Heart left ventricle (tissue), 16 donors: ENCODE measurements at regions of chr12 and their contacts with region 1.

Region 1: DNA sequence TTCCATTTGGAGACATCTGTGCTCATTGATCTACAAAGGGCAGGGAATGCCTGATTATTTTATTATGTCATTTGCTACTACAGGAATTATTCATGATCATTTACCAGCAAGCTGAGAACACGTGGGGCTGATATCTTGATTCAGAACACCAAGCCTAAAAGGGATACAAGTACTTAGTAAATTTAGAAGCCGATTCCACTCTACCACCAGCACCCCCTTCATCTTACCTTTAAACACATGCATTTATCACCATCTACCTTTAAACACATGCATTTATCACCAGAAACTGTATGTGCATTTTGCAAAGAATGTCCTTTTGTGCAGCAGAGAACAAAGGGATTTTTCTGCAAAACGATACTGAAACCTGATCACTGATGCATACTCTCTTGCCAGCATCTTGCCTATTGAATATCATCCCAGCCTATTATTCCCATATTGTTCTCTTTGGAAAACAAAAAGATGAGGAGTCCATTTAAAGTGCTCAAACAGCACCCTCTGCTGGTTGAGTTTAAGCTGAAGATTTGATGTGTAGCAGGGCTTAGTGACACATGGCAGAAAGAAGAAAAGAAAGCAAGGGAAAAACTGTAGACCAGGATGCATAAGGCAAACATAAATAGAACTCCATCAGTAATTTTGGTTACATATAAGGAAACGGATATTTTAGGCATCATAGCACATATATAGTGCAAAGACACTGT is 132.6 kb upstream of the PLEKHG7 start:
- DNase-seq: peak in 3 of 5 donors; percentile 48 to 71 (median 71)
- ATAC-seq: peak; percentile 47 to 89 (median 86)
- H3K4me3 ChIP-seq: no peak overlapping the region
- H3K27ac ChIP-seq: peak overlapping the region in 1 of 12 donors; percentile 59
- H3K4me1 ChIP-seq: peaks cover 0 to 47% (median 4%) of the 10 kb centered on the region in 12 donors
- H3K27me3 ChIP-seq: no peaks in the 10 kb centered on the region
- CTCF ChIP-seq: peak; percentile 71 to 93 (median 80)
- POLR2A ChIP-seq: no peak

Region 2: DNA sequence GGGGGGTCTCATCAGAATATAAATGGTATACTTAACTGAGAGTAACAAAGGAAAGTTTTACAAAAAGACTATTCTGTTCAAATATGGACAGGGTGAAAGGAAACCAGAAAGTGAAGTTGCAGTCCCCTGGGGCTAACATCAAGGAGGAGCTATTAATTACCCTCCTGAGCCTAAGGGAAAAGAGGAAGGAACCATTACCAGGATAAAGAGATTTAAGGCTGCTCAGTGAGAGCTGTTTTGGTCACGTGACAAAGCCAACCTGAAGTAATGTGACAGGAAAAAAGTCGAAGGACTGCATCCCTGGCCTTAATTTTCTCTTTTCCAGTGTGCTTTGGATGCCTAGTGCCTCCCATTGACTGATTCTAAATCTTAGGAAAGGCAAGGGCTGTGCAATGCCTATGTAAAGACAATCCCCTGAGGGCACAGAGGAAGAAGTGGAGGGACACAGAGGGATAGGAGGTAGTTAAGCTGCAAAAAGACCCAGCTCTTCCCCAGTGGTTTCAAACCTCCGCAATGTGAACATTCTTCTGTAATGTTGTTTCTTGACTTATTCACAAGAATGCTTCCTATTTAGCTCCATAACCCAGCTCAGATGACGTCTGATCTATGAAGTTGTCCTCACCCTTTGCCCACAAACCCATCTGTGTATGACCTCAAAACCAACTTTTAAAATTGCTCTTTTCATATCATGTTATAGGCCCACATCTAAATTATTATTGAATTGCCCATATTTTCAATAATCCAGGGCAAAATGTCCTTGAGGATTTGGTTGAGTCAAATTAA is 1199.9 kb before region 1 on chr12:
- intact Hi-C with region 1: loop called in 1 of 10 experiments (anchors 10 kb)
- DNase-seq: no peak
- ATAC-seq: no peak
- H3K4me3 ChIP-seq: no peak overlapping the region
- H3K27ac ChIP-seq: no peak overlapping the region
- H3K4me1 ChIP-seq: no peaks in the 10 kb centered on the region
- H3K27me3 ChIP-seq: no peaks in the 10 kb centered on the region
- CTCF ChIP-seq: no peak
- POLR2A ChIP-seq: no peak

Region 3: GRCh38 chr12:91577586-91578539 is 992.3 kb before region 1 on chr12:
- intact Hi-C with region 1: loop called in 7 of 10 experiments (anchors 2 to 10 kb)
- DNase-seq: no peak
- ATAC-seq: peak in 2 of 4 donors; percentile 45 to 50
- H3K4me3 ChIP-seq: peak overlapping the region in 9 of 12 donors; percentile 17 to 37 (median 26)
- H3K27ac ChIP-seq: peak overlapping the region in 3 of 12 donors; percentile 10 to 45 (median 35)
- H3K4me1 ChIP-seq: peaks cover 0 to 15% (median 7%) of the 10 kb centered on the region in 12 donors
- H3K27me3 ChIP-seq: no peaks in the 10 kb centered on the region
- CTCF ChIP-seq: peak; percentile 62 to 82 (median 72)
- POLR2A ChIP-seq: no peak

Region 4: DNA sequence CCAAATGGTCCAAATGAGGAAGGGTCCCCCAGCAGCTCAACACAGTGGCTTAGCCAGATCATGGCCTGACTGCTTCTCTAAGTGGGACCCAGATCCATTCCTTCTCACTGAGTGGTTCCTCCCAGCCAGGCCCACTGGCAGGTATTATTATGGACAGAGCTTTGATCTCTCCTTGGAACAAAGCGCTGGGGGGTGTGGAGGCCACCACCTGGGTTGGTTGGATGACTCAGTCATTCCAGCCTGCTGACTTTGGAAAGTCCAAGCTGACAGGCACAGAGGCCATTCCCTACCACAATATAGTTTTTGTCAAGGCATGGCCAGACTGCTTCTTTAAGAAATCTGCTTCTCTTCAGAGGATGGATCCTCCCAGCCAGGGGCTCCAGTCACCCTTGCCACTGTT is 765.7 kb before region 1 on chr12:
- intact Hi-C with region 1: loop called in 1 of 10 experiments (anchors 5 kb)
- DNase-seq: no peak
- ATAC-seq: no peak
- H3K4me3 ChIP-seq: no peak overlapping the region
- H3K27ac ChIP-seq: no peak overlapping the region
- H3K4me1 ChIP-seq: no peaks in the 10 kb centered on the region
- H3K27me3 ChIP-seq: no peaks in the 10 kb centered on the region
- CTCF ChIP-seq: no peak
- POLR2A ChIP-seq: no peak

Region 5: GRCh38 chr12:92151916-92152315 is 418.3 kb before region 1 on chr12:
- intact Hi-C with region 1: loop called in 3 of 10 experiments (anchors 2 to 10 kb)
- DNase-seq: no peak
- ATAC-seq: no peak
- H3K4me3 ChIP-seq: no peak overlapping the region
- H3K27ac ChIP-seq: no peak overlapping the region
- H3K4me1 ChIP-seq: peaks cover 0 to 33% (median under 1%) of the 10 kb centered on the region in 12 donors
- H3K27me3 ChIP-seq: no peaks in the 10 kb centered on the region
- CTCF ChIP-seq: no peak
- POLR2A ChIP-seq: no peak

Region 6: GRCh38 chr12:92208613-92209121 is 361.5 kb before region 1 on chr12:
- intact Hi-C with region 1: no loop called
- DNase-seq: peak in 1 of 5 donors; percentile 15
- ATAC-seq: peak; percentile 61 to 94 (median 88)
- H3K4me3 ChIP-seq: peak overlapping the region in 2 of 12 donors; percentile 1 to 39
- H3K27ac ChIP-seq: peak overlapping the region in 6 of 12 donors; percentile 17 to 89 (median 35)
- H3K4me1 ChIP-seq: peaks cover 0 to 34% (median 5%) of the 10 kb centered on the region in 12 donors
- H3K27me3 ChIP-seq: no peaks in the 10 kb centered on the region
- CTCF ChIP-seq: no peak
- POLR2A ChIP-seq: no peak

Region 7: DNA sequence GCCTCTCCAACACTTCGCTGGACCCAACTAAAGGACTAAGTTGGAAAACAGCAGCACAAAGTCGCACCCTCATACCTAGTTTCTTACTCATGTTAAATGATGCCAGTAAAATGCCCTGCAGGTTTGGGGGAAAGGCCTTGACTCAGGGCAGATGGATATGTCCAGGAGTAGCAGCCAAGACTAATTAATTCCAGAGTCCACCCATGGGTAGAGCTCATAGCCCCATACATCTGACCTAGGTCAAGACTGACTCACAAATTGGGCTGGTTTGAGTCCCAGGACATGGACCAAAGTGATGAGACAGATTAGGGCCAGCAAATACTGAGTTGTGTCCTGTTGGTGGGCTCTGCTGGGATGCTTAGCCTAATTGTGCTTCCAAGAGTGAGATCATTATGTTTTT is 200.6 kb before region 1 on chr12:
- intact Hi-C with region 1: loop called in 1 of 10 experiments (anchors 10 kb)
- DNase-seq: no peak
- ATAC-seq: peak in 2 of 4 donors; percentile 41 to 51
- H3K4me3 ChIP-seq: no peak overlapping the region
- H3K27ac ChIP-seq: no peak overlapping the region
- H3K4me1 ChIP-seq: peaks cover 0 to 5% (median 0%) of the 10 kb centered on the region in 12 donors
- H3K27me3 ChIP-seq: no peaks in the 10 kb centered on the region
- CTCF ChIP-seq: no peak
- POLR2A ChIP-seq: no peak